ENCODE measurements at regions of chr2 and their contacts with region 1.

Region 1: DNA sequence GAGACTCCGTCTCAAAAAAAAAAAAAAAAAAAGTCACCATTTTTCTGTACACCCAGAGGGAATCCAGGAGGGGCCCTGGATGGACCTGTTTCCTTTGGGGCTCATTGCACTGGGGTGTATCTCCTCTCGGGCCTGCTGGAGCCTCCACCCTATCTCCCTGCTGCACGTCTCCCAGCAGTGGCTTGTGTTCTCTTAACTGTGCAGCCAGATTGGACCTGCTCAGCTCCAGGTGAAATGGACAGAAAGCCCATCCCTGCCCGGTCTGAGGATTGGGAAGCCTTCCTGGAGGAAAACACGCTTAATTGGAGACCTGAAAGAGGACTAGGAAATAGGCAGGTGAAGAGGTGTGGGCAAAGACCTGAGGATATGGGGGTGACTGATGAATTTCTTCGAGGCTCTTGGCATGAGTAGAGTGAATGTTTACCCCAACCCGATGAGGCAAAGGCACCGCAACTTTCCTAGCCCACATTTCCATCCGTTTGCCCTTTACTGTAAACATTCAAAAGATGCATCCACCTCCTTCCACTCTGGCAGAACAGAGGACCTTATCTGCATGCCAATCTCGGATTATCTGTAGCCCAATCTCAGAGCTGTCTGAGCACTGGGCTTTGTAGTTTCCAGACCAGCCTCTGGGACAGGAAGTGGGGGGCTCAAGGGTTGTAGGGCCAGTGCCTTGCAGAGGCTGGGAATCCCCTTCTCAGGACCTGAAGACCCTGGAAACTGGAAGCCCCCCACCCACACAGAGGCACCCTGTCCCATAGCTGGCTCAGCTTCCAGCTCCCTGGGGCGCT is 2.6 kb upstream of the ZAP70 start:
- DNase-seq: peak in 1 of 9 experiments; percentile 50
- ATAC-seq: no peak
- H3K4me3 ChIP-seq: no peak overlapping the region
- H3K4me3 Mint-ChIP-seq: no peak overlapping the region
- H3K27ac ChIP-seq: peak overlapping the region in 1 of 2 experiments; percentile 15
- H3K27ac Mint-ChIP-seq: peak overlapping the region; percentile 55
- H3K4me1 ChIP-seq: peaks cover 51% of the 10 kb centered on the region
- H3K4me1 Mint-ChIP-seq: peaks cover 55% of the 10 kb centered on the region
- H3K27me3 ChIP-seq: no peaks in the 10 kb centered on the region
- H3K27me3 Mint-ChIP-seq: no peaks in the 10 kb centered on the region
- CTCF ChIP-seq: no peak

Region 2: GRCh38 chr2:97751752-97752151 is 41.0 kb after region 1 on chr2:
- CTCF ChIA-PET with region 1: interaction called, 99 read pairs
- POLR2A ChIA-PET with region 1: interaction called, 10 read pairs
- intact Hi-C with region 1: loop called (anchors 1 kb)
- DNase-seq: no peak
- ATAC-seq: no peak
- H3K4me3 ChIP-seq: no peak overlapping the region
- H3K4me3 Mint-ChIP-seq: no peak overlapping the region
- H3K27ac ChIP-seq: no peak overlapping the region
- H3K27ac Mint-ChIP-seq: no peak overlapping the region
- H3K4me1 ChIP-seq: peaks cover 20% of the 10 kb centered on the region
- H3K4me1 Mint-ChIP-seq: peaks cover 23% of the 10 kb centered on the region
- H3K27me3 ChIP-seq: no peaks in the 10 kb centered on the region
- H3K27me3 Mint-ChIP-seq: no peaks in the 10 kb centered on the region
- CTCF ChIP-seq: no peak

Region 3: GRCh38 chr2:97766567-97766966 is 55.8 kb after region 1 on chr2:
- CTCF ChIA-PET with region 1: interaction called, 10 read pairs
- POLR2A ChIA-PET with region 1: interaction called, 3 read pairs
- intact Hi-C with region 1: no loop called
- DNase-seq: no peak
- ATAC-seq: no peak
- H3K4me3 ChIP-seq: no peak overlapping the region
- H3K4me3 Mint-ChIP-seq: no peak overlapping the region
- H3K27ac ChIP-seq: no peak overlapping the region
- H3K27ac Mint-ChIP-seq: no peak overlapping the region
- H3K4me1 ChIP-seq: peaks cover 13% of the 10 kb centered on the region
- H3K4me1 Mint-ChIP-seq: peaks cover 14% of the 10 kb centered on the region
- H3K27me3 ChIP-seq: no peaks in the 10 kb centered on the region
- H3K27me3 Mint-ChIP-seq: no peaks in the 10 kb centered on the region
- CTCF ChIP-seq: no peak

Region 4: GRCh38 chr2:97834610-97835009 is 123.8 kb after region 1 on chr2:
- CTCF ChIA-PET with region 1: no interaction called
- POLR2A ChIA-PET with region 1: no interaction called
- intact Hi-C with region 1: no loop called
- DNase-seq: no peak
- ATAC-seq: no peak
- H3K4me3 ChIP-seq: no peak overlapping the region
- H3K4me3 Mint-ChIP-seq: no peak overlapping the region
- H3K27ac ChIP-seq: no peak overlapping the region
- H3K27ac Mint-ChIP-seq: peak overlapping the region; percentile 43
- H3K4me1 ChIP-seq: no peaks in the 10 kb centered on the region
- H3K4me1 Mint-ChIP-seq: peaks cover 7% of the 10 kb centered on the region
- H3K27me3 ChIP-seq: no peaks in the 10 kb centered on the region
- H3K27me3 Mint-ChIP-seq: no peaks in the 10 kb centered on the region
- CTCF ChIP-seq: no peak

Region 5: DNA sequence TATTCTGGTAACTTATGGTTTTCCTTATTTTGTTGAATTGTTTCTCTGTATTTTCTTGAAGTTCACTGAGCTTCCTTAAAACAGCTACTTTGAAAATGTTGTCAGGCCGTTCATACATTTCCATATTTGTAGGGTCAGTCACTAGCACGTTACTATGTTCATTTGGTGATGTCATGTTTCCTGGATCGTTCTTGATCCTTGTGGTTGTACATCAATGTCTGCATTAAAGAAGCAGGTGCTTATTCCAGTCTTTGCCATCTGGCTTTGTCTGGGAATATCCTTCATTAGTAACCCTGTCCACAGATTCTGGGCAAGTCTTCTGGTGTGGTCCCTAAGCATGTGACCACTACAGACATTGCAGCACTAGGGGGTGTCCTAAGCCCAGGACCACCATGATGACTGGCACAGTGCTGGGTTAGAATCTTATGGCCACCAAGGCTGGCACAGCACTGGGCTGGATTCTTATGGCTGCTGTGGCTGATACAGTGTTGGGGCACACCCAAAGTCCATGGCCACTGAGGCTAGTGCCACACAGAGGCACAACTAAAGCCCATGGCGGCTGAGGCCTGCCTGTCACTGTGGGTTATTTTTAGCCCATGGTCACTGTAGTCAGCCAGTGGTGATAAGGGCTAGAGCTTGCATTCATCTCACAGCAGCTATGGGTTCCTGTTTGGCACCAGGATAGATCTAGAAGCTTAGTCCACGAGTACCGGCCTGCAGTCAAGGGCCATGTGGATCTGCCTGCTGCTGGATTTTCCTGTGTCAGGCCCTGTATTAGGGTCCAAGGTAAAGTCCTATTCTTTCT is 389.4 kb after region 1 on chr2:
- CTCF ChIA-PET with region 1: no interaction called
- POLR2A ChIA-PET with region 1: no interaction called
- intact Hi-C with region 1: no loop called
- DNase-seq: no peak
- ATAC-seq: no peak
- H3K4me3 ChIP-seq: no peak overlapping the region
- H3K4me3 Mint-ChIP-seq: no peak overlapping the region
- H3K27ac ChIP-seq: no peak overlapping the region
- H3K27ac Mint-ChIP-seq: no peak overlapping the region
- H3K4me1 ChIP-seq: no peaks in the 10 kb centered on the region
- H3K4me1 Mint-ChIP-seq: no peaks in the 10 kb centered on the region
- H3K27me3 ChIP-seq: no peaks in the 10 kb centered on the region
- H3K27me3 Mint-ChIP-seq: peaks cover 4% of the 10 kb centered on the region
- CTCF ChIP-seq: no peak